Sciatic nerve (tissue), 2 donors: ENCODE measurements at regions of chr20 and their contacts with region 1.

Region 1: DNA sequence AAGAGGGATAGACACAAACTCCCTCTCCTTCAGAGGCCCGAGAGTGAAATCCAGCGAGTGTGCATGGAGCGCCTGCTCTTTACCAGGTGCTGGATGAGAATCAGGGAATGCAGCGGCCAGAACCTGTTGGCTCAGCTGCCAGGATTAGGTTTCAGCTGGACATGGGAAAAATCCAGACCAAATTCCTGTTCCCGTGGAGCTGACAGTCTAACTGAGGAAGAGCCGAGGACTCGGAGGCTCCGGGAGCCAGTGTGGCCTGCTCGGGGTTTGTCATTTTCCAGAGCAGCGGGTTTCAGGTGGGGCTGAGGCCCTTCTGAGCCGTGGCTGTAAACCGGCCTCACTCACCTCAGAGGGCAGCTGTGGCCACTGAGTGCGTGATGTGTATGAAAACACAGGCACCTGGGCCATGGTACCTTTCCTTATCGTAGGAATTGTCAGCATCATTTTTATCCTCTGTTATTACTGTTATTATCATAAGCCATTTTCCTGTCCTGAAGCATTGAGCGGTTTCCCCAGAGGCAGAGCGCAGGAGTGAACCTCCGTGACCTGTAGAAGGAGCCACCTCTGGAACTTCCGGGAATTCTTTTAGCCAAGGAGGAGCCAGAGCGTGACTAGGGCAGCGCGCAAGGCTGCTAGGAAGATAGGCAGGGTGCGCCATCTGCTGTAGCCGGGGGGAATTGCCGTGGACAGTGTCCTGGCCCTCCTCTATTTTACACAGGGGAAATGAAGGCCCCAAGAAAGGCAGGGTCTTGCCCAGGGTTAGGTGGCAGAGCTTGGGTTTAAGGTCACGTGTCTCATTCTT is 27.3 kb downstream of the PKIG start:
- DNase-seq: peak; percentile 92
- ATAC-seq: peak; percentile 95

Region 2: GRCh38 chr20:44217342-44218092 is 392.2 kb before region 1 on chr20:
- intact Hi-C with region 1: loop called (anchors 5 kb)
- DNase-seq: peak; percentile 75
- ATAC-seq: peak; percentile 61

Region 3: GRCh38 chr20:44532259-44532980 is 77.3 kb before region 1 on chr20:
- intact Hi-C with region 1: loop called (anchors 10 kb)
- DNase-seq: no peak
- ATAC-seq: peak; percentile 32